Psoas muscle (tissue), 8 donors: ENCODE measurements at regions of chr9 and their contacts with region 1.

Region 1: DNA sequence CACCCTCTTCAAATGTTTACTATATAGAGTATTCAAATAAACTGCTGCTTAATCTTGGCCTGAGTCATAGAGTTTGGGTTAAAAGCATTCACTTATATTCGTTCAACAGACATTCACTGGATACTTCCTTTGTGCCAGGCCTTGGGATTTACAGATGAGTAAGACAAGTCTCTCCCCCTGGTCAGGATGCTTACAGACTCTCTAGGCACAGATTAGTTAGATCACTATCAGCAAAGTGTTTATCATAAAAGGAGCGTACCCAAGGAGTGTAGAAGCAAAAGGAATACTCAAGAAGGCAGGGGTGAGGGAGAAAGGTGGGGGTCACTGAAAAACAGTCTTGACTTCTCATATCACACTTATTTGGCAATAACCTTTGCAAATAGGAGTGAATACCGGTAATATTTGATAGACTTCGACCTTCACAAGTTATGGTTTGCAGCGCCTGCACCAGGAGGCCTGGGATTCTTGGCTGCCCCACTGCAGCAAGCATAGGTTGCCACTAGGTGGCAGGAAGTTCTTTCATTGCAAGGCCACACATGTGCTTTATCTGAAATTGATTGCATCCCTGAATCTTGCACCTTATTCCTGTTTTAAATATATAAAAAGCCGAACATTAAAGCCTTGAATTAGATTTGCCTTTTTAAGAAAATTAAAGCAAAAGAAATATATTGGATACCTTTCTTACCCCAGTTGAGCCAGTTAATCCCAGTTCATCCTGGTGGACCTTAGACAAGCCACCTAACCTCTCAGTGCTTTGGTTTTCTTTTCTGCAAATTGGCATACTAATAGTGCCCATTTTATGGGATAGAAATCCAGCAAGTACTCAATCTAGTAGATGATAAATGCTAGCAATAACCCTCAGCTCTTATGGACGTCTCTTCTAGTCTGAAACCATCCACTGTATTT is 6.5 kb upstream of the TRMT10B start:
- DNase-seq: peak in 1 of 2 donors; percentile 49
- ATAC-seq: peak; percentile 73 to 92 (median 82)
- H3K4me3 ChIP-seq: no peak overlapping the region
- H3K27ac ChIP-seq: no peak overlapping the region
- H3K4me1 ChIP-seq: no peaks in the 10 kb centered on the region
- H3K27me3 ChIP-seq: no peaks in the 10 kb centered on the region
- CTCF ChIP-seq: peak; percentile 89

Region 2: GRCh38 chr9:36676778-36677485 is 1070.2 kb before region 1 on chr9:
- intact Hi-C with region 1: no loop called
- DNase-seq: no peak
- ATAC-seq: no peak
- H3K4me3 ChIP-seq: no peak overlapping the region
- H3K27ac ChIP-seq: no peak overlapping the region
- H3K4me1 ChIP-seq: no peaks in the 10 kb centered on the region
- H3K27me3 ChIP-seq: no peaks in the 10 kb centered on the region
- CTCF ChIP-seq: no peak

Region 3: GRCh38 chr9:37476930-37477329 is 270.2 kb before region 1 on chr9:
- intact Hi-C with region 1: loop called in 1 of 2 experiments (anchors 5 kb)
- DNase-seq: no peak
- ATAC-seq: no peak
- H3K4me3 ChIP-seq: no peak overlapping the region
- H3K27ac ChIP-seq: no peak overlapping the region
- H3K4me1 ChIP-seq: no peaks in the 10 kb centered on the region
- H3K27me3 ChIP-seq: peaks cover 0 to 3% (median 0%) of the 10 kb centered on the region in 3 donors
- CTCF ChIP-seq: no peak

Region 4: GRCh38 chr9:37582548-37583157 is 164.4 kb before region 1 on chr9:
- intact Hi-C with region 1: loop called (anchors 5 kb)
- DNase-seq: no peak
- ATAC-seq: peak; percentile 68 to 85 (median 73)
- H3K4me3 ChIP-seq: no peak overlapping the region
- H3K27ac ChIP-seq: no peak overlapping the region
- H3K4me1 ChIP-seq: no peaks in the 10 kb centered on the region
- H3K27me3 ChIP-seq: no peaks in the 10 kb centered on the region
- CTCF ChIP-seq: peak; percentile 80

Region 5: DNA sequence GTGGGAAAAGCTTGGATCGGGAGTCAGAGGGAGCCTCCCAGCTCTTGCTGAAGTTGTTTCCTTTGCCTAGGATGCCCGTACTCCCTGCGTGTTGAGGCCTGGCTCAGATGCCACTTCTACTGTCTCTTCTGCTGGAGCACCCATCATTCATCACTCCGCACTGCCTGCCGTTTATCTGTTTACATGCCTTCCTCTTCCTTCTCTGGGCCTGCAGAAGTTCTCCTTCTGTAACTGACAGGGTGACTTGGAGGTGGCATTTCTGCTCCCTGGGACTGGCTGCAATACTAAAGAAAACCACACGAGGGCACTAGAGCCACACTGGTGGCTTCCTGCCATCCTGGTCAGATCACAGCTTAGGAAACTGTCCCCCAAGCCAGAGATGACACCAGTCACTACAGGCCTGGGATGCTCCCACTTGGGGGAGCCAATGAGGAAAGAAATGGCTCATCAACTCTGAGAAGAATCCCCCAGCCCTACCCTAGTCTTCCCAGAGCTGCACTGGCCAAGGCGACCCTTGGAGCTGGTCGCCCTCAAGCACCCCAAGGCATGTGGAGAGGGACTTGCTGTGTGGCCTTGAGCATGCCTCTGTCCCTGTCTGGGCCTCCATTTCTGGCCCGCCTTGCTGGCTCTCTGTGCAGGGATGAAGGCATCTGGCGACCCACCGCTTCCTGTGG is 166.5 kb after region 1 on chr9:
- intact Hi-C with region 1: no loop called
- DNase-seq: peak; percentile 62 to 77
- ATAC-seq: peak; percentile 90 to 94 (median 92)
- H3K4me3 ChIP-seq: no peak overlapping the region
- H3K27ac ChIP-seq: no peak overlapping the region
- H3K4me1 ChIP-seq: peaks cover 4% of the 10 kb centered on the region
- H3K27me3 ChIP-seq: no peaks in the 10 kb centered on the region
- CTCF ChIP-seq: peak; percentile 98

Region 6: DNA sequence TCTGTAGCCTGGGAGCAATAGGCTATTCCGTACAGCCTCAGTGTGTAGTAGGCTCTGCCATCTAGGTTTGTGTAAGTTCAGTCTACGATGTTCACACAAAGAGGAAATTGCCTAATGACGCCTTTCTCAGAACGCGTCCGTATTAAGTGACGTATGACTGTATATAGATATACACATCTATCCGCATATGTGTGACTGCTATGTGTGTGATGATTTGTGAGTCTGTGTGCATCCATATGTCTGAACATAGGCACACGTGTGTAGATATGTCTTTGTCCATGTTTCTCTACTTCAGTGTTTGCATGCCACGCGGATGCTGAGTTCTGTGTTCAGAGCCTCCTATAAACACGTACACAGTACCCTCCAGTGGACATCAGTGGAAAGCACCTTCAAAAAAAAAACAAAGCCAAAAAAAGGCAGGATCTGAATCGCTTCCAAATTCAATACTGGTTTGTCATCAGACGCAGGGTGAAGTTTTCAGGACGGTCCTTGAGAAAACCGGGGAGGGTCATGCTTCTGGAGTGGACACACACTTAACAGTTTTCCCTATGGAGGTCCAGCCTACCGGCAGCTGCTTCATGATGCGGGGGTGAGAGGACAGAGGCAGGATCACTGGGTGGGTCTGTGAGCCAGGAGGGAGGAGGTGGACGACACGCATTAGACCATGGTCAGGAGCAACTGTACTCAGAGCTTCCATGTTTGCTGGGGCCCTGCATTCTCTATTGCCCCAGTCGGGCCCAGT is 615.9 kb after region 1 on chr9:
- intact Hi-C with region 1: loop called in 1 of 2 experiments (anchors 10 kb)
- DNase-seq: peak in 1 of 2 donors; percentile 28
- ATAC-seq: peak; percentile 75 to 86 (median 79)
- H3K4me3 ChIP-seq: no peak overlapping the region
- H3K27ac ChIP-seq: no peak overlapping the region
- H3K4me1 ChIP-seq: no peaks in the 10 kb centered on the region
- H3K27me3 ChIP-seq: no peaks in the 10 kb centered on the region
- CTCF ChIP-seq: peak; percentile 70